GM12878 (cell line): ENCODE measurements at regions of chr3 and their contacts with region 1.

Region 1: GRCh38 chr3:152096280-152096906 is 172.3 kb upstream of the MBNL1 start:
- DNase-seq: no peak
- ATAC-seq: no peak
- H3K4me3 ChIP-seq: no peak overlapping the region
- H3K27ac ChIP-seq: no peak overlapping the region
- H3K4me1 ChIP-seq: no peaks in the 10 kb centered on the region
- H3K27me3 ChIP-seq: no peaks in the 10 kb centered on the region
- CTCF ChIP-seq: no peak
- EP300 ChIP-seq: no peak
- POLR2A ChIP-seq: no peak
- RAD21 ChIP-seq: no peak

Region 2: GRCh38 chr3:151328298-151328995 is 767.9 kb before region 1 on chr3:
- CTCF ChIA-PET with region 1: no interaction called
- POLR2A ChIA-PET with region 1: no interaction called
- RAD21 ChIA-PET with region 1: no interaction called
- SMC1A ChIA-PET with region 1: no interaction called
- in situ Hi-C with region 1: no loop called
- intact Hi-C with region 1: no loop called
- DNase-seq: no peak
- ATAC-seq: peak; percentile 32
- H3K4me3 ChIP-seq: no peak overlapping the region
- H3K27ac ChIP-seq: no peak overlapping the region
- H3K4me1 ChIP-seq: no peaks in the 10 kb centered on the region
- H3K27me3 ChIP-seq: 0 out of 4 replicates have a peak, but pooled peaks cover 0 to 3% of the 10 kb centered on the region in 2 experiments
- CTCF ChIP-seq: no peak
- EP300 ChIP-seq: no peak
- POLR2A ChIP-seq: no peak
- RAD21 ChIP-seq: no peak

Region 3: GRCh38 chr3:152084441-152085158 is 11.8 kb before region 1 on chr3:
- CTCF ChIA-PET with region 1: interaction called, 3 read pairs
- POLR2A ChIA-PET with region 1: no interaction called
- RAD21 ChIA-PET with region 1: no interaction called
- SMC1A ChIA-PET with region 1: interaction called, 13 read pairs
- in situ Hi-C with region 1: no loop called
- intact Hi-C with region 1: no loop called
- DNase-seq: no peak
- ATAC-seq: no peak
- H3K4me3 ChIP-seq: no peak overlapping the region
- H3K27ac ChIP-seq: no peak overlapping the region
- H3K4me1 ChIP-seq: no peaks in the 10 kb centered on the region
- H3K27me3 ChIP-seq: no peaks in the 10 kb centered on the region
- CTCF ChIP-seq: no peak
- EP300 ChIP-seq: no peak
- POLR2A ChIP-seq: no peak
- RAD21 ChIP-seq: no peak